Psoas muscle (tissue), 8 donors: ENCODE measurements at regions of chr3 and their contacts with region 1.

Region 1: GRCh38 chr3:132981719-132982118 is 56.5 kb upstream of the TMEM108 start:
- DNase-seq: no peak
- ATAC-seq: no peak
- H3K4me3 ChIP-seq: no peak overlapping the region
- H3K27ac ChIP-seq: peak overlapping the region; percentile 79
- H3K4me1 ChIP-seq: peaks cover 28% of the 10 kb centered on the region
- H3K27me3 ChIP-seq: no peaks in the 10 kb centered on the region
- CTCF ChIP-seq: no peak

Region 2: DNA sequence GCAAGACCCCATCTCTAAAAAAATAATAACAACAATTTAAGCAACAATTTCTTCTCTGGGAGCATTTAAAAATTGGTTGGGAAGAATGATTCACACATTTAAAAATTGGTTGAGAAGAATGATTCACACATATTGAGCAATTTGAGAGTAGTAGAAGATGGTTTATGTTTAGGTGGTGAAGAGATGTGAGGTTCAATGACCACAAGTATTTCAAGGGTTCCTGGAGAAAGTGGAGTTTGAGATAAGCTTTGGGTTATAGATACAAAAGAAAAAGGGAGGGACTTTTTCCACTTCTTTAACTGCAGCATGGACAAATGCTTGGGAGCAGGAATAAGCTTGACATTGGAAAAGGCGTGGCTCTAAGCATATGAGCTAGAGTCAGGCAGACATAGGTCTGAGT is 113.8 kb before region 1 on chr3:
- intact Hi-C with region 1: loop called in 1 of 2 experiments (anchors 10 kb)
- DNase-seq: no peak
- ATAC-seq: no peak
- H3K4me3 ChIP-seq: no peak overlapping the region
- H3K27ac ChIP-seq: no peak overlapping the region
- H3K4me1 ChIP-seq: no peaks in the 10 kb centered on the region
- H3K27me3 ChIP-seq: no peaks in the 10 kb centered on the region
- CTCF ChIP-seq: no peak